Activated B cell treated with CpG ODN at 0.5 μM for 24 hours (primary cell): ENCODE measurements at regions of chr11 and their contacts with region 1.

Region 1: DNA sequence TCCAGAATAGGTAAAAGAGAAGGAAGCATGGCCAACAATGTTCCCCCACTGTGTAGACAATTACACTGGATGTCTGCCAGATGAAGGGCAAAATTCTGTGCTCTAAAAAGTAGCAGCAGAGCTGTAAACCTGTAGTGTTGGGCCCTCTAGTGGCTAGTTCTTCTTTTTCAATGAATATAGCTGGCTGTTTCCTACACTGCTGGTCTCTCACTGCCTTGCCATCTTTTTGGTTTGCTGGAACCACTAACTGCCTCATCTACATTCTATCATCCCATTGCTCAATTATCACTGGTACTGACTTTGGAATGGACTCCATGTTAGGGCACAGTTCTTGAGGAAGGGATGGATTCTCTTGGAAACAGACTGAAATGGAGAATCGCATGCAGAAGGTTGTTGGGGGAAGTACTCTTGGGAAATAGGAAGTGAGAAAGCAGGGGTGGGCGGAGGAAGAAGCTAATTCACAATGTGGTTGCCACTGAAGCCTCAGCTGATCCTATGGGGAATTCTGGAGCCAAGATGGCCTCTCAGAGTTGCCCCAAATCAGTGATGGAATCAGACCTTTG is 17.9 kb downstream of the KCNE3 start:
- DNase-seq: peak; percentile 15
- ATAC-seq: peak; percentile 92
- H3K4me3 Mint-ChIP-seq: peak overlapping the region; percentile 54
- H3K27ac Mint-ChIP-seq: no peak overlapping the region
- H3K4me1 Mint-ChIP-seq: peaks cover 9% of the 10 kb centered on the region
- H3K27me3 Mint-ChIP-seq: peaks cover 15% of the 10 kb centered on the region
- CTCF ChIP-seq: no peak

Region 2: GRCh38 chr11:74255741-74256369 is 193.6 kb before region 1 on chr11:
- CTCF ChIA-PET with region 1: interaction called, 59 read pairs
- POLR2A ChIA-PET with region 1: interaction called, 3 read pairs
- intact Hi-C with region 1: loop called (anchors 1 kb)
- DNase-seq: no peak
- ATAC-seq: peak; percentile 75
- H3K4me3 Mint-ChIP-seq: no peak overlapping the region
- H3K27ac Mint-ChIP-seq: no peak overlapping the region
- H3K4me1 Mint-ChIP-seq: no peaks in the 10 kb centered on the region
- H3K27me3 Mint-ChIP-seq: no peaks in the 10 kb centered on the region
- CTCF ChIP-seq: peak; percentile 62

Region 3: GRCh38 chr11:74388678-74389327 is 60.6 kb before region 1 on chr11:
- CTCF ChIA-PET with region 1: interaction called, 181 read pairs
- POLR2A ChIA-PET with region 1: no interaction called
- intact Hi-C with region 1: loop called (anchors 1 kb)
- DNase-seq: no peak
- ATAC-seq: peak; percentile 81
- H3K4me3 Mint-ChIP-seq: no peak overlapping the region
- H3K27ac Mint-ChIP-seq: no peak overlapping the region
- H3K4me1 Mint-ChIP-seq: peaks cover 2% of the 10 kb centered on the region
- H3K27me3 Mint-ChIP-seq: no peaks in the 10 kb centered on the region
- CTCF ChIP-seq: peak; percentile 73

Region 4: DNA sequence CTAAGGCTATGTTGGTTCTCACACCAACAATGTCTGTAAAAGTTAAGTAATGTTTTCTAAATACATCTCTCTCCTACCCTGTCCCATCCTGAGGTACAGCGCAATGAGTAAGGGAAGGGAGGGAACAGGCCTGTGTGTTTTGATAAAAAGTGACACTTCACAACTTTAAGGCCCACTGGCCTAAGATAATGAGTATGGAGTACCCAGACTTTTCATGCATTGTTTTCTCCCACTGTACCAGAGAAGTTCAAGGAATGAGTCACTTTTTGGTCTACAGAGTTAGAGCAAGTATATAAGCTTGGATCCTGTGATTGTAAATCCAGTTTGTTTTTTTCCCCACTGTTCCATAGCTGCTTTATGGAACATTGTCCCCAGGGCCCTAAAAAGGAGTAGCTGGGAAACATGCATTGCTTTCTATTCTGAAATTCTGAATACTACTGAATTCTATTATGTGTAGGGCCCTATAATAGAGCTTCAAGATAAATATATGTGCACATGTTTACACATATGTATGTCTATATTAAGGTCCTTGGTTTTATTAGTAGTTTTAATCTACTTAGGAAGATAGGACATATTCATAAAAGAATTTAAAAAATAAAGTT is 11.9 kb before region 1 on chr11:
- CTCF ChIA-PET with region 1: interaction called, 10 read pairs
- POLR2A ChIA-PET with region 1: no interaction called
- intact Hi-C with region 1: no loop called
- DNase-seq: no peak
- ATAC-seq: no peak
- H3K4me3 Mint-ChIP-seq: no peak overlapping the region
- H3K27ac Mint-ChIP-seq: no peak overlapping the region
- H3K4me1 Mint-ChIP-seq: no peaks in the 10 kb centered on the region
- H3K27me3 Mint-ChIP-seq: peaks cover 9% of the 10 kb centered on the region
- CTCF ChIP-seq: no peak

Region 5: GRCh38 chr11:74478877-74479731 is 29.7 kb after region 1 on chr11:
- CTCF ChIA-PET with region 1: interaction called, 4 read pairs
- POLR2A ChIA-PET with region 1: interaction called, 10 read pairs
- intact Hi-C with region 1: no loop called
- DNase-seq: no peak
- ATAC-seq: no peak
- H3K4me3 Mint-ChIP-seq: no peak overlapping the region
- H3K27ac Mint-ChIP-seq: no peak overlapping the region
- H3K4me1 Mint-ChIP-seq: no peaks in the 10 kb centered on the region
- H3K27me3 Mint-ChIP-seq: no peaks in the 10 kb centered on the region
- CTCF ChIP-seq: no peak

Region 6: DNA sequence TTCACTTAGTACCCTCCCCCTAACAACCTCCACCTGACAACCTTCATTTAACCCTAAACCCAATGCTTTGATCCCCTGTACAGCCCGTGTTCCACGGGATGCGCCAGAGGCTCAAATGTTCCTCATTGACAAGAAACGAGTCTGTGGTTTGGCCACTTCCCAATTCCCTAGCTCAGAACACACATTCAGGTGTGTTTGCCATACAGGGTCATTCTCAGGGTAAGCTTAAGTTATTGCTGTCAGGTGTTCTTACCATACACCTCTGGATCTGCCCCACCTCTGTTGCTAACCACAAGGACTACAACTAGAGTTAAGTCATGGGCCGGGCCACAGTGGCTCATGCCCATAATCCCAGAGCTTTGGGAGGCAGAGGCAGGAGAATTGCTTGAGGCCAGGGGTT is 97.3 kb after region 1 on chr11:
- CTCF ChIA-PET with region 1: no interaction called
- POLR2A ChIA-PET with region 1: no interaction called
- intact Hi-C with region 1: no loop called
- DNase-seq: no peak
- ATAC-seq: no peak
- H3K4me3 Mint-ChIP-seq: no peak overlapping the region
- H3K27ac Mint-ChIP-seq: no peak overlapping the region
- H3K4me1 Mint-ChIP-seq: no peaks in the 10 kb centered on the region
- H3K27me3 Mint-ChIP-seq: peaks cover 2% of the 10 kb centered on the region
- CTCF ChIP-seq: no peak

Region 7: GRCh38 chr11:74570266-74571061 is 121.0 kb after region 1 on chr11:
- CTCF ChIA-PET with region 1: interaction called, 59 read pairs
- POLR2A ChIA-PET with region 1: no interaction called
- intact Hi-C with region 1: no loop called
- DNase-seq: no peak
- ATAC-seq: peak; percentile 49
- H3K4me3 Mint-ChIP-seq: no peak overlapping the region
- H3K27ac Mint-ChIP-seq: no peak overlapping the region
- H3K4me1 Mint-ChIP-seq: no peaks in the 10 kb centered on the region
- H3K27me3 Mint-ChIP-seq: peaks cover 8% of the 10 kb centered on the region
- CTCF ChIP-seq: no peak

Region 8: DNA sequence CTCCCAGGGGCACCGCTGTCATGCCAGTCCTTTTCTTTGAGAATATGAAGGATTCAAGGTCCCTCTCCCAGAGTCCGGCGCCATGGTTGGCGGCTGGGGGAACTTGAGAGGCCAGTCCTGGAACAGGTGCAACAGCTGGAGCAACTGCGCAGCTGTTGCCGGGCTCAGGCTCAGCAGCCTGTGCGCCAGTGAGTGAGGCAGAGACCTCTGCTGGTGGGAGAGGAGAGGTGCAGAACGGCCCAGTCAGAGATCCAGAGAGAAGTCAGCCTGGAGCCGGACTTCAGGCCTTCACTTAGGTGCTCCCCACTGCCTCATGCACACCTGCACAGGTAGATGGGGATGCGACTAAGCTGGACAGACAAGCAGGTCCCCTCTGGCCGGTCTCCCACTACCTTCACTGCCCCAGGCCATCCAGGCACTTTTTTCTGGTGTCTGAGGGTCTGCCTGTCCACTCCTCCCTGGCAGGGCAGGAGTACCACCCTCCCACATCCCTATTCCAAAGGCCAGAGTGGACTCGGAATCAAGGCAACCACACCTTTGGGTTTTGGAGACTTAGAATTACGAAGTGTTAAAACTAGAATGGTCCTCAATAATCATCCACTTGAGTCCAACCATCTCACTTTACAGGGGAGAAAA is 277.2 kb after region 1 on chr11:
- CTCF ChIA-PET with region 1: interaction called, 3 read pairs
- POLR2A ChIA-PET with region 1: no interaction called
- intact Hi-C with region 1: loop called (anchors 5 kb)
- DNase-seq: peak; percentile 31
- ATAC-seq: peak; percentile 97
- H3K4me3 Mint-ChIP-seq: no peak overlapping the region
- H3K27ac Mint-ChIP-seq: no peak overlapping the region
- H3K4me1 Mint-ChIP-seq: peaks cover 8% of the 10 kb centered on the region
- H3K27me3 Mint-ChIP-seq: peaks cover 41% of the 10 kb centered on the region
- CTCF ChIP-seq: peak; percentile 81